GM23248 (cell line): ENCODE measurements at regions of chr3 and their contacts with region 1.

Region 1: GRCh38 chr3:170811928-170812591 is 57.9 kb downstream of the RPL22L1 start:
- DNase-seq: peak; percentile 78
- H3K4me3 ChIP-seq: no peak overlapping the region
- H3K27ac ChIP-seq: no peak overlapping the region
- H3K4me1 ChIP-seq: peaks cover 39% of the 10 kb centered on the region
- H3K27me3 ChIP-seq: no peaks in the 10 kb centered on the region

Region 2: GRCh38 chr3:170307671-170308403 is 504.2 kb before region 1 on chr3:
- in situ Hi-C with region 1: loop called (anchors 10 kb)
- DNase-seq: peak; percentile 16
- H3K4me3 ChIP-seq: no peak overlapping the region
- H3K27ac ChIP-seq: no peak overlapping the region
- H3K4me1 ChIP-seq: peaks cover 13% of the 10 kb centered on the region; the same call in 1 of the 2 replicates
- H3K27me3 ChIP-seq: no peaks in the 10 kb centered on the region

Region 3: GRCh38 chr3:170414202-170414663 is 397.8 kb before region 1 on chr3:
- in situ Hi-C with region 1: loop called (anchors 10 kb)
- DNase-seq: peak; percentile 90
- H3K4me3 ChIP-seq: 0 out of 2 replicates have a peak overlapping the region, but pooled peaks have one; percentile 25
- H3K27ac ChIP-seq: peak overlapping the region; percentile 50
- H3K4me1 ChIP-seq: peaks cover 14% of the 10 kb centered on the region
- H3K27me3 ChIP-seq: no peaks in the 10 kb centered on the region